ENCODE measurements at regions of chr22 and their contacts with region 1.

Region 1: GRCh38 chr22:32465661-32466060 is 1.4 kb upstream of the BPIFC start:
- DNase-seq: no peak
- H3K4me3 ChIP-seq: no peak overlapping the region
- H3K27ac ChIP-seq: no peak overlapping the region
- H3K4me1 ChIP-seq: no peaks in the 10 kb centered on the region
- H3K27me3 ChIP-seq: no peaks in the 10 kb centered on the region
- CTCF ChIP-seq: no peak
- POLR2A ChIP-seq: no peak

Region 2: GRCh38 chr22:32270641-32271369 is 194.9 kb before region 1 on chr22:
- intact Hi-C with region 1: no loop called
- DNase-seq: no peak
- H3K4me3 ChIP-seq: no peak overlapping the region
- H3K27ac ChIP-seq: no peak overlapping the region
- H3K4me1 ChIP-seq: no peaks in the 10 kb centered on the region
- H3K27me3 ChIP-seq: no peaks in the 10 kb centered on the region
- CTCF ChIP-seq: no peak
- POLR2A ChIP-seq: no peak

Region 3: GRCh38 chr22:32411829-32412592 is 53.6 kb before region 1 on chr22 and contains the start of gene RTCB:
- intact Hi-C with region 1: no loop called
- DNase-seq: peak; percentile 77 to 89
- H3K4me3 ChIP-seq: peak within 1 kb of the TSS; percentile 96 to 99 (median 97)
- H3K27ac ChIP-seq: peak within 1 kb of the TSS; percentile 83 to 86
- H3K4me1 ChIP-seq: peaks cover 5 to 6% of the 10 kb centered on the region in 2 donors
- H3K27me3 ChIP-seq: no peaks in the 10 kb centered on the region
- CTCF ChIP-seq: no peak
- POLR2A ChIP-seq: peak; percentile 23
- total RNA-seq, gene RTCB: 75.4 to 84.6 (median 76.6) TPM

Region 4: DNA sequence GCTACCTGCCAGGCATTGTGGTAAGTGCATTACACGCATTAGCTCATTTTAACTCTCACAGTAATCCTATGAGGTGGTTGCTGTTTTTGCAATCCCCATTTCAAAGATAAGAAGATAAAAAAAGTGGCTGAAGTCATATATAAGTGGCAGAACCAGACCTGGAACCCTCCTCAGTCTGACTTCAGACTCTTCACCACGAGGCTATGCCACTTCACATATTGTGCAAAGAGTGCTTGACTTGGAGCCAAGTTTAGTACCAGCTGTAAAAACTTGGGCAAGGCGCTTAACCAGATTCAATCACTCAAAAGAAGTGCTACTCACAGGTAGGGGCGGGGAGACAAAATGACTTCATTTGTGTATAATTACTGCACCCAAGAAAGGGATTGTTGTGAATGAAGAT is 16.7 kb before region 1 on chr22:
- intact Hi-C with region 1: loop called (anchors 1 kb)
- DNase-seq: no peak
- H3K4me3 ChIP-seq: no peak overlapping the region
- H3K27ac ChIP-seq: no peak overlapping the region
- H3K4me1 ChIP-seq: no peaks in the 10 kb centered on the region
- H3K27me3 ChIP-seq: peaks cover 0 to 10% of the 10 kb centered on the region in 2 donors
- CTCF ChIP-seq: no peak
- POLR2A ChIP-seq: no peak